MCF 10A (cell line): ENCODE measurements at regions of chr6 and their contacts with region 1.

Region 1: GRCh38 chr6:168865-169455 is 123.3 kb upstream of the DUSP22 start:
- DNase-seq: peak; percentile 64
- H3K4me3 Mint-ChIP-seq: no peak overlapping the region
- H3K27ac Mint-ChIP-seq: no peak overlapping the region
- H3K4me1 Mint-ChIP-seq: no peaks in the 10 kb centered on the region
- H3K27me3 Mint-ChIP-seq: peaks cover 47% of the 10 kb centered on the region
- CTCF ChIP-seq: peak; percentile 40

Region 2: DNA sequence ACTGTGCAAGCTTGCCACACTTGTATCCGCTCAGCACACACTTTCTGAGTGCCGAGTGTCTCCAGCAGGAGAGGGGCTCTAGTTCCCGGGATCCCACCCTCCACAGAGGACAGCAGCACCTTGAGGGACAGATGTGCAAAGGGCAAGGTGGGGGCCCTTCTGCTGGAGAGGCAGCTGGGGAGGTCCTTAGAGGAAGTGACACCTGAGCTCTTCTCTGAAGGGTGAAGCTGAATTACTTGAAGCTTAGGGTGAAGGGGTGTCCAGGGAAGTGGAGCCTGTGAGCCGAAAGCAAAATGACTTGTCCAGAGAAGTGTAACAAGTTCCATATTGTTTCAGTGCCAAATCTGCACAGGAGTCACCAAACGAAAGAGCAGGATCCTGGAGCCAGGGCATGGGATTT is 12.9 kb before region 1 on chr6:
- CTCF ChIA-PET with region 1: interaction called, 12 read pairs
- POLR2A ChIA-PET with region 1: interaction called, 3 read pairs
- intact Hi-C with region 1: no loop called
- DNase-seq: no peak
- H3K4me3 Mint-ChIP-seq: no peak overlapping the region
- H3K27ac Mint-ChIP-seq: no peak overlapping the region
- H3K4me1 Mint-ChIP-seq: peaks cover 9% of the 10 kb centered on the region
- H3K27me3 Mint-ChIP-seq: peaks cover 89% of the 10 kb centered on the region
- CTCF ChIP-seq: no peak

Region 3: GRCh38 chr6:188821-189655 is 20.1 kb after region 1 on chr6:
- CTCF ChIA-PET with region 1: no interaction called
- POLR2A ChIA-PET with region 1: no interaction called
- intact Hi-C with region 1: no loop called
- DNase-seq: peak; percentile 97
- H3K4me3 Mint-ChIP-seq: no peak overlapping the region
- H3K27ac Mint-ChIP-seq: peak overlapping the region; percentile 69
- H3K4me1 Mint-ChIP-seq: peaks cover 18% of the 10 kb centered on the region
- H3K27me3 Mint-ChIP-seq: no peaks in the 10 kb centered on the region
- CTCF ChIP-seq: peak; percentile 92